Endothelial cell of umbilical vein (primary cell): ENCODE measurements at regions of chr17 and their contacts with region 1.

Region 1: DNA sequence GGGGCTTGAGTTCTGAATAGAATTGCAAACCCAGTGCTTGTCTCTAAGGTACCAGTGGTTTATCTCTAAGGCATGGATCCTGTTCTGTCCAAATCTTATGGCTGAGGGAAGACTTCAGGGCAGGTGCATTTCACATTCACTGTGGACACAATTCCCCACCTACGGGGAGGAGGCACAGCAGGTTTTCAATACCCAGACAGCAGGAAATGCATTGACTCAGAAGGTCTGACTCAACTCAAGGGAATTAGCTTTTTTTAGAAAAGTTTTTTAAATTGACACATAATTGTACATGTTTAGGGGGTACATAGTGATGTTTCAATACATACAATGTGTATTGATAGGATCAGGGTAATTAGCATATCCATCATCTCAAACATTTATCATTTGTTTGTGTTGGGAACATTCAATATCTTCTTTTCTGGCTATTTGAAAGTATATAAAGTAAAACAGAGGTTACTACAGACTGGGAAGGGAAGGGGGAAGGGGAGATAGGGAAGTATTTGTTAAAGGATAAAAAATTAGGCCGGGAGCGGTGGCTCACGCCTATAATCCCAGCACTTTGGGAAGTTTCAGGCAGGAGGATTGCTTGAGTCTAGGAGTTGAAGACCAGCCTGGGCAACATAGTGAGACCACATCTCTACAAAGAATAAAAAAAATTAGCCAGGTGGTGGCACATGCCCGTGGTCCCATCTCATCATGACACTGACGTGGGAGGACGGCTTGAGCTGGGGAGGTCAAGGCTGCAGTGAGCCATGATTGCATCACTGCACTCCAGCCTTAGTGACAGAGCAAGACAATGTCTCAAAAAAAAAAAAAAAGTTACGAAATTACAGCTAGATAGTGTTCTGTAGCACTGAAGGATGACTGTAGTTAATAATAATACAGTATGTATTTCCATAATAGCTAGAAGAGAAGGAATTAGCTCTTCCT is 54.9 kb downstream of the RGS9 start:
- DNase-seq: peak; percentile 62
- H3K4me3 ChIP-seq: no peak overlapping the region
- H3K27ac ChIP-seq: peak overlapping the region; percentile 75
- H3K4me1 ChIP-seq: peaks cover 12% of the 10 kb centered on the region
- H3K27me3 ChIP-seq: peaks cover 0 to 3% of the 10 kb centered on the region in 2 experiments
- CTCF ChIP-seq: no peak
- POLR2A ChIP-seq: no peak

Region 2: GRCh38 chr17:65154770-65155621 is 37.1 kb before region 1 on chr17:
- CTCF ChIA-PET with region 1: interaction called, 4 read pairs
- POLR2A ChIA-PET with region 1: no interaction called
- dilution Hi-C with region 1: no loop called
- intact Hi-C with region 1: loop called (anchors 5 kb)
- DNase-seq: peak; percentile 35
- H3K4me3 ChIP-seq: no peak overlapping the region
- H3K27ac ChIP-seq: no peak overlapping the region
- H3K4me1 ChIP-seq: peaks cover 6% of the 10 kb centered on the region
- H3K27me3 ChIP-seq: peaks cover 17 to 20% of the 10 kb centered on the region in 2 experiments
- CTCF ChIP-seq: no peak
- POLR2A ChIP-seq: no peak